Common myeloid progenitor, CD34-positive (primary cell): ENCODE measurements at regions of chr6 and their contacts with region 1.

Region 1: GRCh38 chr6:121849477-121849876 is 414.0 kb downstream of the GJA1 start:
- DNase-seq: peak; percentile 63 to 79 (median 71)
- H3K4me3 ChIP-seq: no peak overlapping the region
- H3K27ac ChIP-seq: no peak overlapping the region
- H3K4me1 ChIP-seq: no peaks in the 10 kb centered on the region
- H3K27me3 ChIP-seq: peaks cover 0 to 8% (median 0%) of the 10 kb centered on the region in 5 experiments

Region 2: GRCh38 chr6:121430514-121431460 is 418.7 kb before region 1 on chr6:
- CTCF ChIA-PET with region 1: interaction called, 36 read pairs
- POLR2A ChIA-PET with region 1: no interaction called
- DNase-seq: peak in 2 of 3 donors; percentile 15 to 22
- H3K4me3 ChIP-seq: no peak overlapping the region
- H3K27ac ChIP-seq: no peak overlapping the region
- H3K4me1 ChIP-seq: no peaks in the 10 kb centered on the region
- H3K27me3 ChIP-seq: peaks cover 3 to 18% (median 9%) of the 10 kb centered on the region in 5 experiments

Region 3: GRCh38 chr6:121436960-121437850 is 412.3 kb before region 1 on chr6:
- CTCF ChIA-PET with region 1: interaction called, 36 read pairs
- POLR2A ChIA-PET with region 1: no interaction called
- DNase-seq: peak; percentile 12 to 48 (median 42)
- H3K4me3 ChIP-seq: peak overlapping the region in 6 of 7 experiments; percentile 23 to 85 (median 66)
- H3K27ac ChIP-seq: no peak overlapping the region
- H3K4me1 ChIP-seq: peaks cover 0 to 17% (median 13%) of the 10 kb centered on the region in 4 experiments
- H3K27me3 ChIP-seq: peaks cover 24 to 65% (median 29%) of the 10 kb centered on the region in 5 experiments

Region 4: GRCh38 chr6:121443971-121444541 is 405.4 kb before region 1 on chr6:
- CTCF ChIA-PET with region 1: interaction called, 12 read pairs
- POLR2A ChIA-PET with region 1: no interaction called
- DNase-seq: no peak
- H3K4me3 ChIP-seq: no peak overlapping the region
- H3K27ac ChIP-seq: no peak overlapping the region
- H3K4me1 ChIP-seq: no peaks in the 10 kb centered on the region
- H3K27me3 ChIP-seq: peaks cover 4 to 28% (median 10%) of the 10 kb centered on the region in 5 experiments